CD8-positive, alpha-beta T cell (primary cell): ENCODE measurements at regions of chr4 and their contacts with region 1.

Region 1: GRCh38 chr4:152500800-152501434 is 35.0 kb downstream of the FBXW7 start:
- DNase-seq: peak in 7 of 9 experiments; percentile 19 to 90 (median 56)
- ATAC-seq: peak; percentile 80
- H3K4me3 ChIP-seq: no peak overlapping the region
- H3K4me3 Mint-ChIP-seq: no peak overlapping the region
- H3K27ac ChIP-seq: no peak overlapping the region
- H3K27ac Mint-ChIP-seq: no peak overlapping the region
- H3K4me1 ChIP-seq: peaks cover 3% of the 10 kb centered on the region
- H3K4me1 Mint-ChIP-seq: peaks cover 39% of the 10 kb centered on the region
- H3K27me3 ChIP-seq: no peaks in the 10 kb centered on the region
- H3K27me3 Mint-ChIP-seq: no peaks in the 10 kb centered on the region
- CTCF ChIP-seq: peak; percentile 64

Region 2: GRCh38 chr4:151117371-151117962 is 1383.5 kb before region 1 on chr4:
- CTCF ChIA-PET with region 1: no interaction called
- POLR2A ChIA-PET with region 1: no interaction called
- intact Hi-C with region 1: loop called in 1 of 2 experiments (anchors 2 kb)
- DNase-seq: peak in 8 of 9 experiments; percentile 24 to 65 (median 50)
- ATAC-seq: peak; percentile 80
- H3K4me3 ChIP-seq: no peak overlapping the region
- H3K4me3 Mint-ChIP-seq: no peak overlapping the region
- H3K27ac ChIP-seq: no peak overlapping the region
- H3K27ac Mint-ChIP-seq: no peak overlapping the region
- H3K4me1 ChIP-seq: no peaks in the 10 kb centered on the region
- H3K4me1 Mint-ChIP-seq: peaks cover 1% of the 10 kb centered on the region
- H3K27me3 ChIP-seq: no peaks in the 10 kb centered on the region
- H3K27me3 Mint-ChIP-seq: no peaks in the 10 kb centered on the region
- CTCF ChIP-seq: peak; percentile 86

Region 3: DNA sequence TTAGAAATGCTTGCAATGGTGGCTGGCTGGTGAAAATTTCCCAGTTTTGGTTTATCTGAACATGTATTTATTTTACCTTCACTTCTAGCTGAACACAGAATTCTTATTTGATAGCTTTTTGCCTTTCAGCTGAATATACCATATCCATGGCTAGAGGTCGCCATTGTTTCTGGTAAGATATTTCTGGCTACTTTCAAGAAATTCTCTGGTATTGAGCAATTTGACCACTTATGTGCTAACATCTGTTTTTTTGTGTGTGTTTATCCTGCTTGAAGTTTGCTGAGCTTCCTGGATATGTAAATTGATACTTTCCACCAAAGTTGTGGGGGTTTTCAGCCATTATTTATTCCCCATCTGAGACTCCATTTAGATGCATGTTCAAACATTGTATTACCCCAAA is 40.4 kb before region 1 on chr4:
- CTCF ChIA-PET with region 1: interaction called, 4 read pairs
- POLR2A ChIA-PET with region 1: no interaction called
- intact Hi-C with region 1: loop called in 1 of 2 experiments (anchors 5 kb)
- DNase-seq: no peak
- ATAC-seq: no peak
- H3K4me3 ChIP-seq: no peak overlapping the region
- H3K4me3 Mint-ChIP-seq: no peak overlapping the region
- H3K27ac ChIP-seq: no peak overlapping the region
- H3K27ac Mint-ChIP-seq: no peak overlapping the region
- H3K4me1 ChIP-seq: peaks cover 35% of the 10 kb centered on the region
- H3K4me1 Mint-ChIP-seq: peaks cover 69% of the 10 kb centered on the region
- H3K27me3 ChIP-seq: no peaks in the 10 kb centered on the region
- H3K27me3 Mint-ChIP-seq: no peaks in the 10 kb centered on the region
- CTCF ChIP-seq: no peak

Region 4: DNA sequence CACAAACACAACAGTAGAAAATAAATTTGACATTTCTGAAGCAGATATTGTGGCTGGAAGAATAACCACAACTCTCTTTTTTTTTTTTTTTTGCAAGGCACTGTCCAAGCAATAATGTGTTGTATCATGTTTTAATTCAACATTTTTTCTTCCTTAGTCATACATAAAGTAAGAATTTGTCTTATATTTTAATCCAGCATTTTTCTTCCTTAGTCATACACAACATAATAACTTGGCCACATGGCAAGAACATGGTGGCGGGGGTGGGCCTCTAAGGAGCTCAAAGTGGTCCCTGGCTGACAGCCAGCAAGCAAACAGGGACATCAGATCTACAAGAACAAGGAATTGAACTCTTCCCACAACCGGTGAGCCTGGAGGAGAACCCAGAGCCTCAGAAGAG is 14.8 kb after region 1 on chr4:
- CTCF ChIA-PET with region 1: interaction called, 19 read pairs
- POLR2A ChIA-PET with region 1: interaction called, 3 read pairs
- intact Hi-C with region 1: no loop called
- DNase-seq: no peak
- ATAC-seq: no peak
- H3K4me3 ChIP-seq: no peak overlapping the region
- H3K4me3 Mint-ChIP-seq: no peak overlapping the region
- H3K27ac ChIP-seq: no peak overlapping the region
- H3K27ac Mint-ChIP-seq: no peak overlapping the region
- H3K4me1 ChIP-seq: peaks cover 3% of the 10 kb centered on the region
- H3K4me1 Mint-ChIP-seq: peaks cover 48% of the 10 kb centered on the region
- H3K27me3 ChIP-seq: no peaks in the 10 kb centered on the region
- H3K27me3 Mint-ChIP-seq: no peaks in the 10 kb centered on the region
- CTCF ChIP-seq: no peak

Region 5: DNA sequence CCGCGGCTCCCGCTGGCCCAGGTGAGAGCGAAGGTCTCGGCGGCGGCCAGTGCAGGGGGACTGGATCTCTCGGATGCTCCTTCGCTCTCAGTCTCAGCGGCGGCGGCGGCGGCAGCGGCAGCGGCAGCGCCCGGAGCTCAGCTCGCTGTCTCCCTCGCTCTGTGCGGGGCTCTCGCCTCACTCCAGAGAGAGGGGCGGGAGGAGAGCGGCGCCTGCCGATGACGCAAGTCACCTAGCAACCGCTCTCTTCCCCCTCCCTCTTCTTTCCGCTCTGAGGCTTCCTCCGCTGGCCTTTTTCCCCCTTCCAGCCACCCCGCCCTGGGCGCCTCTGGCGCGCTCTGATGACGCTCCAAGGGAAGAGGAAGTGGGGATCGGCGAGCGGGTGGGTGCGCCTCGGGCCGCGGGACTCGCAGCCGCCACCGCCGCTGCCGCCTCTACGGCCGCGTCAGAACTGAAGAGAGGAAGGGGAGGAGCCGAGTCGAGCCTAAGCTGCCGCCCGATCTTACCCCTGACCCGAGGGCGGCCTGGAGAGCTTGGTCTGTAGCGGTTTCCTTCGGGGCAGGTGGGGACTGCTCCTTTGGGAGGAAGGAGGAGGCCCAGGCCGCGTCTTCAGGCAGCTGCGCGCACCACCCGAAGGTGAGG is 35.1 kb after region 1 on chr4 and contains the start of gene FBXW7:
- CTCF ChIA-PET with region 1: interaction called, 26 read pairs
- POLR2A ChIA-PET with region 1: interaction called, 6 read pairs
- intact Hi-C with region 1: loop called in 1 of 2 experiments (anchors 2 kb)
- DNase-seq: peak; percentile 99 to 100 (median 100)
- ATAC-seq: peak; percentile 77
- H3K4me3 ChIP-seq: peak within 1 kb of the TSS; percentile 79
- H3K4me3 Mint-ChIP-seq: peak within 1 kb of the TSS; percentile 87
- H3K27ac ChIP-seq: peak within 1 kb of the TSS; percentile 97 to 98
- H3K27ac Mint-ChIP-seq: peak within 1 kb of the TSS; percentile 97
- H3K4me1 ChIP-seq: peaks cover 52% of the 10 kb centered on the region
- H3K4me1 Mint-ChIP-seq: peaks cover 64% of the 10 kb centered on the region
- H3K27me3 ChIP-seq: no peaks in the 10 kb centered on the region
- H3K27me3 Mint-ChIP-seq: no peaks in the 10 kb centered on the region
- CTCF ChIP-seq: no peak
- total RNA-seq, gene FBXW7: 129 to 135 TPM

Region 6: GRCh38 chr4:152640058-152640833 is 139.3 kb after region 1 on chr4:
- CTCF ChIA-PET with region 1: interaction called, 179 read pairs
- POLR2A ChIA-PET with region 1: interaction called, 5 read pairs
- intact Hi-C with region 1: loop called (anchors 1 kb)
- DNase-seq: peak in 2 of 9 experiments; percentile 24 to 43
- ATAC-seq: peak; percentile 38
- H3K4me3 ChIP-seq: no peak overlapping the region
- H3K4me3 Mint-ChIP-seq: no peak overlapping the region
- H3K27ac ChIP-seq: no peak overlapping the region
- H3K27ac Mint-ChIP-seq: no peak overlapping the region
- H3K4me1 ChIP-seq: no peaks in the 10 kb centered on the region
- H3K4me1 Mint-ChIP-seq: peaks cover 11% of the 10 kb centered on the region
- H3K27me3 ChIP-seq: no peaks in the 10 kb centered on the region
- H3K27me3 Mint-ChIP-seq: no peaks in the 10 kb centered on the region
- CTCF ChIP-seq: peak; percentile 85